H1 (cell line): ENCODE measurements at regions of chr2 and their contacts with region 1.

Region 1: DNA sequence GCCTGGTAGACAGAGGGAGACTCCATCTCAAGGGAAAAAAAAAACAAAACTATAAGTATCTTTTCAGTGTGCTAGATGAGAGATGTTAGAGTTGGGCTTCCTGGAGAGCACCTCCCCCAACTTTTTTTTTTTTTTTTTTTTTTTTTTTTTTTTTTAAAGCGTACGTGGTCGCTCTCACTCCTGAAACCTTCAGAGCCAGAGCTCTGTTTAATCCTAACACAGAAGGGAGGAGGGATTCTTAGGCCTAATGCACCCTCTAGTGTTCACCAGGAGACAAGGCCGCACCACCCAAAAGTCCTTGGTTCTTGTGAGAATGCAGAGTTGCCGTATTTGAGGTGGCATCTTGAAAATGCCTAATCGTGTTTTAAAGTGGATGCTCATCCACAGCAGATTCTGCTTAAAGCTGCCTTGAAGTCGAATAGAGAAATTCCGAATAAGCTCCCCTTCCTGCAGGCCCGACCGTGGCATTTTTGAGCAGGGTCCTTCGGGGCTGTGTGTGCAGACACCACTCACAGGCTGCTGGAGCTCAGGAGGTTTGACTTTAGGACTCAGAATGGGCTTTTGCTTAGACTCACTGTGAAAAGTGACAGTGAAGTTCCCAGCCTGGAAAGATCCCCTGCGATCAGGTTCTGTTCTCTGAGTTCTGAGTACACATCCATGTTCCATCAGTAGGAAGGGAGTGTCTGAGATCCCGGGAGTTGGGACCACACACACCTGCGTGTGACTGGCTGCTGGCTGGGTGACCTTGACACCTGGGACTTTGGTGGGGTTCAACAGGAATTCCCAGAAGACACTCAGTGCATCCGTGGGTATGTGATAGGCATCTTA is 252.6 kb downstream of the AGAP1 start:
- DNase-seq: no peak
- H3K4me3 ChIP-seq: no peak overlapping the region
- H3K27ac ChIP-seq: no peak overlapping the region
- H3K4me1 ChIP-seq: peaks cover 5 to 19% (median 9%) of the 10 kb centered on the region in 4 experiments
- H3K27me3 ChIP-seq: no peaks in the 10 kb centered on the region
- CTCF ChIP-seq: peak; percentile 66 to 83 (median 78)
- EP300 ChIP-seq: no peak
- POLR2A ChIP-seq: no peak
- RAD21 ChIP-seq: peak; percentile 89 to 90

Region 2: GRCh38 chr2:235694721-235695601 is 51.5 kb before region 1 on chr2:
- CTCF ChIA-PET with region 1: interaction called, 13 read pairs
- POLR2A ChIA-PET with region 1: no interaction called
- DNase-seq: no peak
- H3K4me3 ChIP-seq: no peak overlapping the region
- H3K27ac ChIP-seq: no peak overlapping the region
- H3K4me1 ChIP-seq: peaks cover 2 to 18% (median 6%) of the 10 kb centered on the region in 4 experiments
- H3K27me3 ChIP-seq: no peaks in the 10 kb centered on the region
- CTCF ChIP-seq: no peak
- EP300 ChIP-seq: no peak
- POLR2A ChIP-seq: no peak
- RAD21 ChIP-seq: no peak

Region 3: DNA sequence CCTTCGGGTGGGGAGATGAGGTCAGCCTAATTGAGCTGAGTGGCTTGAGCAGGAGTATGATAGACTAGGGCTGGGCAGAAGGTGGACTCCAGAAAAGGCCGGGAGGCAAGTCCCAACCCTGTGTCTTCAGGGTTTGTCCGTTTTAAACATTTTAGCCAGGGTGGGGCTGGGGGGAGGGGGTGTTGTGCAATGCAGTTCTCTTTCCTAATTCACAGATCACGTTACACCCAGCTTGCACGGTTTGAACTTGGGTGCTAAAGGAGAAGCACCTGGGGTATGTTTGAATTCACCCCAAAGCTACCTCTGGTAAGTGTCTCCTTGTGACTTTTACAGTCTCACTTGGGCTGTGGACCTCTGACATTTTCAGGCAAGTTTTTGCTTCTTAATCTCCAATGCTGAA is 19.3 kb before region 1 on chr2:
- CTCF ChIA-PET with region 1: interaction called, 15 read pairs
- POLR2A ChIA-PET with region 1: no interaction called
- DNase-seq: no peak
- H3K4me3 ChIP-seq: no peak overlapping the region
- H3K27ac ChIP-seq: no peak overlapping the region
- H3K4me1 ChIP-seq: peaks cover 0 to 2% (median under 1%) of the 10 kb centered on the region in 4 experiments; a peak in 3 of 7 replicates
- H3K27me3 ChIP-seq: no peaks in the 10 kb centered on the region
- CTCF ChIP-seq: no peak
- EP300 ChIP-seq: no peak
- POLR2A ChIP-seq: no peak
- RAD21 ChIP-seq: no peak

Region 4: GRCh38 chr2:235734688-235735231 is 11.7 kb before region 1 on chr2:
- CTCF ChIA-PET with region 1: interaction called, 23 read pairs
- POLR2A ChIA-PET with region 1: no interaction called
- DNase-seq: no peak
- H3K4me3 ChIP-seq: no peak overlapping the region
- H3K27ac ChIP-seq: no peak overlapping the region
- H3K4me1 ChIP-seq: peaks cover 0 to 8% (median 7%) of the 10 kb centered on the region in 4 experiments; a peak in 5 of 7 replicates
- H3K27me3 ChIP-seq: no peaks in the 10 kb centered on the region
- CTCF ChIP-seq: no peak
- EP300 ChIP-seq: no peak
- POLR2A ChIP-seq: no peak
- RAD21 ChIP-seq: no peak

Region 5: DNA sequence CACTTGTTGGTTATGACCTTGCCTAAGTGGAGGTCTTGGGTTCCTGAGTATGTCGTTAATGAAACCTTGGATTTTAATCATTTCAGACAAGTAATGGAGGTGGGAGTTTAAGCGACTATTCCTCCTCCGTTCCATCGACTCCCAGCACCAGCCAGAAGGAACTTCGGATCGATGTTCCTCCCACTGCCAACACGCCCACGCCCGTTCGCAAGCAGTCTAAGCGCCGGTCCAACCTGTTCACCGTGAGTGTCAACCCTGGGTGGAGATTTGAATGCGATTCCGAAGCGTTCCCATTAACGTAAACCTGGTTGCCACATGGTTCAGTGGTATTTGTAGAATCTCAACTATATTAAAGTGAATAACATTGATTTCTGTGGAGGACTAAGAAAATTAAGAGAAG is 52.8 kb after region 1 on chr2:
- CTCF ChIA-PET with region 1: no interaction called
- POLR2A ChIA-PET with region 1: no interaction called
- DNase-seq: no peak
- H3K4me3 ChIP-seq: no peak overlapping the region
- H3K27ac ChIP-seq: no peak overlapping the region
- H3K4me1 ChIP-seq: peaks cover 0 to 3% (median 1%) of the 10 kb centered on the region in 4 experiments; a peak in 1 of 7 replicates
- H3K27me3 ChIP-seq: no peaks in the 10 kb centered on the region; a peak in 1 of 7 replicates
- CTCF ChIP-seq: no peak
- EP300 ChIP-seq: no peak
- POLR2A ChIP-seq: no peak
- RAD21 ChIP-seq: no peak